Activated T-helper 1 cell treated with anti-CD3 and anti-CD28 coated beads, Interleukin-12 subunit alpha, Interleukin-12 subunit beta, Interleukin-2, Interleukin-4 antibody, amounts not matched to agents 30 ng/mL and 10 ng/mL and 1 ng/mL, durations not matched to agents 14 hours and 24 hours and 36 hours (primary cell): ENCODE measurements at regions of chr19 and their contacts with region 1.

Region 1: GRCh38 chr19:7535035-7535992 is at the start of gene PNPLA6:
- DNase-seq: peak; percentile 91
- H3K4me3 Mint-ChIP-seq: peak within 1 kb of the TSS; percentile 95
- H3K27ac Mint-ChIP-seq: peak within 1 kb of the TSS; percentile 92
- H3K4me1 Mint-ChIP-seq: peaks cover 14% of the 10 kb centered on the region
- H3K27me3 Mint-ChIP-seq: no peaks in the 10 kb centered on the region
- total RNA-seq, gene PNPLA6: 131 and 136 TPM in 2 replicates

Region 2: DNA sequence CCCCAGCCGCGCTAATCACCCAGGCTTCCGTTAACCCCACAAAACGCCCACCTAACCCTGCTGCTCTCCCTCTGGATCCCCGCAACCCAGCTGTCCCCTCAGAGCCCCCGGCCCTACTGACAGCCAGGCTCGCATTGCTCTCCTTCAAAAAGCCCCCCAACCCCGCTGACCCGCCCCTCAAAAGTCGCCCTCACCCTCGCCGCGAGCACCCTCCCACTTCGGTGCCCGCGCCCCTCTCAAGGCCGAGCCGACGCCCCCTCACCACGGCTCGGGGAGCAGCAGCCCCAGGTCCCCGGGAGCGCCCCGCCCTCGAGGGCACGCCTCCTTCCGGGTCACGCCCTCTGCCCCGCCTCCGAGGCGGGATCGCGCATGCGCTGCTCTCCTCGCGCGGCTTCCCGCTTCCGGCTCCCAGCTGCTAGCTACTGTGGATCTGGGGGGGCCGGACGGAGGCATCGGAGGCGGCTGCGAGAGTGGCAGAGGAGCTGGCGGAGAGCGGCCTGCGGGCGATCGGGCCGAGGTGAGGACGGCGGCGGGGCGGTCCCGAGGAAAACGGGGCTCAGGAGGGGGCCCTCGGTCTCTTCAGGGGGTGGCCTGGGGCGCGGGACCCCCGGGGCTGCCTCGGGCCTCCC is 140.5 kb before region 1 on chr19:
- intact Hi-C with region 1: loop called (anchors 1 kb)
- DNase-seq: peak; percentile 93
- H3K4me3 Mint-ChIP-seq: peak overlapping the region; percentile 89
- H3K27ac Mint-ChIP-seq: peak overlapping the region; percentile 61
- H3K4me1 Mint-ChIP-seq: peaks cover 26% of the 10 kb centered on the region
- H3K27me3 Mint-ChIP-seq: no peaks in the 10 kb centered on the region

Region 3: DNA sequence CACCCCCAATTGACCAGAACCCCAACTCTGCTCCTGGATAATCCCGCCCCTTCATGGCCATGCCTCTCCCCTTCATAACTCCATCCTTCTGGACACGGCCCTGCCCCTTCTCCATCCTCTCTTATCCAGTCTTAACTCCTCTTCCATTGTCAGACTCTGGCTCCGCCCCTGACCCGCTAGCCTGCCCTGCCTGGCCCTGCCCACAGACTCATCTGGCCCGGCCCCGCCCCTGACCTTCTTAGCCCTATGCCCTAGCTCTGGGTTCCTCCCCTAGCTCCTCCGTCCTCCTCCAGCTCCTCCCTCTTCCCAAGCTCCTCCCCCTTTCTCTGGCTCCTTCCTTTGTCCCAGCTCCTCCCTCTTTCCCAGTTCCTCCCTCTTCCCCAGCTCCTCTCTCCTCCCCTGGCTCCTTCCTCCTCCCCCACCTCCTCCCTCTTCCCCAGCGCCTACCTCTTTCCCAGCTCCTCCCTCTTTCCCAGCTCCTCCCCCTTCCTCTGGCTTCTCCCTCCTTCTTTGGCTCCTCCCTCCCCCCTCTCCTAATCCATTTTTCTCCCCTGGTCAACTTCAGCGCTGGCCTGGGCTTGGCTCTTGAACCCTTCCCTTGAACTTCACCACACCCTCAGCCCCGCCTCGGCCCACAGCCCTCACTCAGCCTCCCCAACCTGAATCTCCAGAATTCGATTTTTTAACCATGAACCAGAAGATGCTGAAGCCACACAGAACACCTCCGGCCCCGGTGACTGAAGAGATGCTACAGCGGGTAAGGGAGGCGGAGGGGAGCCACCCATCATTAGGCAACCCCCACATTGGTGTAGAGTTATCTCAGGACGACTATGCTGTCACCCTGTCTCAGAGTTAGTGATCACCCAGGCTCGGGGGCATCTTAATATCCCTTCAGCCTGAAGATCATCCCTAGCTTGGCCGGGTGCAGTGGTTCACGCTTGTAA is 28.7 kb before region 1 on chr19:
- intact Hi-C with region 1: no loop called
- DNase-seq: peak; percentile 33
- H3K4me3 Mint-ChIP-seq: peak overlapping the region; percentile 26
- H3K27ac Mint-ChIP-seq: no peak overlapping the region
- H3K4me1 Mint-ChIP-seq: no peaks in the 10 kb centered on the region
- H3K27me3 Mint-ChIP-seq: peaks cover 26% of the 10 kb centered on the region

Region 4: DNA sequence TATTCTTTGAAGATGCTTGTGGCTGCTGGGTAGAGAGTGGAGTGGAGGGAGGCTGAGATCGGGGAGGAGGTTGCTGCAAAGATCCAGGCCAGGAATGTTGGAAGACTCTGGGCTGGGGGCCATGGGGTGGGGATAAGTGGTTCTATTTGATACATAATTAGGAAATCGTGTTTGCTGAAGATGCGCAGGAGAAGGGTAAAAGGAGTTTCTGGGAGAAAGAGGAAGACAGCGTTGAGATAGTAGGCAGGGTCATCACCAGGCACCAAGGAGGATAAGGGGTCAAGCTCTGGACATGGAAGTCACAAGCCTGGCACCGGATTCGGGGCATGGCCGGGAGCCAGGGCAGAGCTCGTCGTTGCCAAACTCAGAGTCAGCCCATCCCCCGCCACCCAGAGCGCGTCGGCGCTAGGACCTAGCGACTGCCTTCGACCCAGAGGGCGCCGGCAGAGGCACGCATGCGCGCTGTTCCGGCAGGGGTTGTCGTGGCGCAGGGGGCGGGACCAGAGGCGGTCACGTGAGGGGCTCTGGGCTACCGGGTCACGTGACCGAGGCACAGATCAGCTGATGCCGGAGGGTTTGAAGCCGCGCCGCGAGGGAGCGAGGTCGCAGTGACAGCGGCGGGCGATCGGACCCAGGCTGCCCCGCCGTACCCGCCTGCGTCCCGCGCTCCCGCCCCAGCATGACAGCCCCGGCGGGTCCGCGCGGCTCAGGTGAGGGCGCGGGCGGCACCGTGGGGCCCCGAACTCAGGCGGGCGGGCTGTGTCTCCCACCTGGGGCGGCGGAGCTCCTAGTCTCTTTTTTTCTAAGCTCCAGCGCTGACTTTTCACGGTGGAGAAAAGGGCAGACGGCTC is 13.0 kb before region 1 on chr19 and contains the start of gene MCOLN1:
- intact Hi-C with region 1: loop called (anchors 1 kb)
- DNase-seq: peak; percentile 99
- H3K4me3 Mint-ChIP-seq: peak within 1 kb of the TSS; percentile 80
- H3K27ac Mint-ChIP-seq: peak within 1 kb of the TSS; percentile 89
- H3K4me1 Mint-ChIP-seq: peaks cover 8% of the 10 kb centered on the region
- H3K27me3 Mint-ChIP-seq: peaks cover 8% of the 10 kb centered on the region
- total RNA-seq, gene MCOLN1: 14.0 and 14.4 TPM in 2 replicates

Region 5: DNA sequence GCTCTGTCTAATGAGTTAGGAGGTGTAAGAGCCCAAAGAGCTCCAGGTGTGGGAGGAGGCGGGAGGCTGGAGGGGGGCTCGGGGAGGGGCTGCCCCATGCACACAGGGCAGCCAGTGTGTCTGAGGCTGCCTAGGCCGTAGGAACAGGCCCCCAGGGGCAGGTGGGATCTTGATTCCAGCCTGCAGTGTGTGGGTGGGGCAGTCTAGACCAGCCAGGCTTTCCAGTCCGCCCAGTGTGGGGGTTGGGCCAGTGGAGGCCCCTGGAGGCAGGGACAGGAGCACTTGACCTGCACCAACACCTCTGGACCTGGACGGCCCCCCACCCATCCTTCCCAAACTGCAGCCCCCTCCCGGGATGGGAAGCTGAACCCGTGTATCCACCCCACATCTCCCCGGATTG is 54.9 kb after region 1 on chr19:
- intact Hi-C with region 1: no loop called
- DNase-seq: no peak
- H3K4me3 Mint-ChIP-seq: no peak overlapping the region
- H3K27ac Mint-ChIP-seq: no peak overlapping the region
- H3K4me1 Mint-ChIP-seq: peaks cover 3% of the 10 kb centered on the region
- H3K27me3 Mint-ChIP-seq: peaks cover 22% of the 10 kb centered on the region

Region 6: DNA sequence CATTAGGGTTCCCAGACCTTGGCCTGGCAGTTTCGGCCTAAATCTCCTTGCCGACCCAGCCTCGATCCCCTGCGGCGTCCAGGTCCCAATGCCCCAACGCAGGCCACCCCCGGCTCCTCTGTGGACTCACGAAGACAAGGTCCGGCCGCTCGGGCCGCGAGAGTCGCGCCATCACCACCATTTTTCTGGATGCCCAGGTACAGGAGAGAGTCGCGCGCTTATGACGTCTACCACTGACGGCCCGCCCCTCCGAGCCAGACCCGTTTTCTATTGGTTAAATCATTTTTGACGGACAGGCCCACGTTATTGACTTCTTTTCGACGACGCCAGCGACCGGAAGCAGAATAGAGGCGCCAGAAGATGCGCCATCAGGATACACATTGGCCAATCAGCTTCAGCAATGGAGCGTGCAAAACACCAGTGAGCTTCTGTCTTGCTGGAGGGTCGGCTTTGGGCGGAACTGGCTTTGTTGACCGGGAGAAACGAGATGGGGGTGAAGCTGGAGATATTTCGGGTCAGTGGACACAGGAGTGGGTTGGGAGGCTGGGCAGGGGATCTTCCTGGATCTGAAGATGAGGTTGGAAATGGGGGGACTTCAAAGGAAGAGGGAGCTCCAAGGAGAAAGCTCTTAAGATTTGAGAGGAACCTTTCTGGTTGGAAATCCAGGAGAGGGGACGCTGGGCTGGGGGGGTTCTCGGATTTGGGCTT is 94.2 kb after region 1 on chr19 and contains the starts of genes PET100 and XAB2:
- intact Hi-C with region 1: loop called (anchors 1 kb)
- DNase-seq: peak; percentile 93
- H3K4me3 Mint-ChIP-seq: peak within 1 kb of the TSS; percentile 98
- H3K27ac Mint-ChIP-seq: peak within 1 kb of the TSS; percentile 98
- H3K4me1 Mint-ChIP-seq: peaks cover 31% of the 10 kb centered on the region
- H3K27me3 Mint-ChIP-seq: no peaks in the 10 kb centered on the region
- total RNA-seq, gene PET100: 88.5 and 93.4 TPM in 2 replicates
- total RNA-seq, gene XAB2: 50.7 and 51.2 TPM in 2 replicates

Region 7: GRCh38 chr19:8113016-8113416 is 577.7 kb after region 1 on chr19:
- intact Hi-C with region 1: no loop called
- DNase-seq: no peak
- H3K4me3 Mint-ChIP-seq: no peak overlapping the region
- H3K27ac Mint-ChIP-seq: no peak overlapping the region
- H3K4me1 Mint-ChIP-seq: no peaks in the 10 kb centered on the region
- H3K27me3 Mint-ChIP-seq: no peaks in the 10 kb centered on the region